ENCODE measurements at regions of chr20 and their contacts with region 1.

Region 1: GRCh38 chr20:19995220-19995863 is 21.8 kb upstream of the NAA20 start:
- DNase-seq: peak; percentile 24
- H3K4me3 ChIP-seq: no peak overlapping the region
- H3K27ac ChIP-seq: no peak overlapping the region
- H3K4me1 ChIP-seq: peaks cover 16% of the 10 kb centered on the region
- H3K27me3 ChIP-seq: no peaks in the 10 kb centered on the region
- CTCF ChIP-seq: peak; percentile 68 to 78 (median 74)
- POLR2A ChIP-seq: no peak

Region 2: GRCh38 chr20:19692685-19693119 is 302.6 kb before region 1 on chr20:
- intact Hi-C with region 1: loop called (anchors 5 kb)
- DNase-seq: peak; percentile 39
- H3K4me3 ChIP-seq: no peak overlapping the region
- H3K27ac ChIP-seq: no peak overlapping the region
- H3K4me1 ChIP-seq: no peaks in the 10 kb centered on the region
- H3K27me3 ChIP-seq: no peaks in the 10 kb centered on the region
- CTCF ChIP-seq: peak; percentile 87 to 96 (median 90)
- POLR2A ChIP-seq: no peak

Region 3: DNA sequence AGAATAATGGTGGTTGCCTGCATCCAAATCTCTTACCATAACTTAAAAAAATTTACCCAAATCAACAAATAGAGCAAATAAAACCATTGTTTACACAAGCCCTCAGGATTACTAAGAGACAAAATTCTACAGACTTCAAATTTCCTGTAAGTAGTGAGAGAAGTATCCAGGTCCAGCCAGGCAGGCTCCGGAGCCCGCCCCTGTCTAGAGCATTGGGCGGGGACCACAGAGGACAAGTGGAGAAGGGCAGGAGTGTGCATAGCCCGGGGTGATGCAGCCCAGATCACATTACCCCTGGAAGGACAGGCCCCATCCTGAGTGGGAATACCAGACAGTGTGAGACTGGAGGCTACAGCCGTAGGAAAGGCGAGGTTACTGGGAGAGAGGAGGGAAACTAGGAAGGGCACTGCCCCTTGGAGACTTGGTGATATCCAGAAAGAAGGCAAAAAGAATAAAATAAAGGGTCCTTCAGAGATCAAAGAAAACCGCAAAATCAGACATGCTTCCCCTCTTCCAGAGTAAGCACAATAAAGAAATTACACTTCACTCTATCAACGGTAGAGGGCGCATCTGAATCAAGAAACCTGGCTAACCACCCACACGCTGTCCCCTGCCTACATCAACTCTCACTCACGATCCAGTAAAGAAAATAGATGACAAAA is 210.7 kb before region 1 on chr20:
- intact Hi-C with region 1: loop called (anchors 5 kb)
- DNase-seq: peak; percentile 79
- H3K4me3 ChIP-seq: no peak overlapping the region
- H3K27ac ChIP-seq: peak overlapping the region; percentile 43 to 50
- H3K4me1 ChIP-seq: no peaks in the 10 kb centered on the region
- H3K27me3 ChIP-seq: no peaks in the 10 kb centered on the region
- CTCF ChIP-seq: peak; percentile 49 to 81 (median 78)
- POLR2A ChIP-seq: no peak

Region 4: GRCh38 chr20:19944772-19945459 is 50.4 kb before region 1 on chr20:
- intact Hi-C with region 1: loop called (anchors 5 kb)
- DNase-seq: no peak
- H3K4me3 ChIP-seq: no peak overlapping the region
- H3K27ac ChIP-seq: peak overlapping the region; percentile 83 to 86
- H3K4me1 ChIP-seq: peaks cover 18% of the 10 kb centered on the region
- H3K27me3 ChIP-seq: no peaks in the 10 kb centered on the region
- CTCF ChIP-seq: no peak
- POLR2A ChIP-seq: no peak

Measured in prostate gland (tissue), 2 donors.